CD4-positive, alpha-beta T cell (primary cell): ENCODE measurements at regions of chr4 and their contacts with region 1.

Region 1: GRCh38 chr4:76504613-76505465 is 69.8 kb downstream of the SHROOM3 start:
- DNase-seq: peak in 3 of 14 experiments; percentile 43 to 57 (median 46)
- ATAC-seq: no peak
- H3K4me3 ChIP-seq: no peak overlapping the region
- H3K4me3 Mint-ChIP-seq: no peak overlapping the region
- H3K27ac ChIP-seq: no peak overlapping the region
- H3K27ac Mint-ChIP-seq: no peak overlapping the region
- H3K4me1 ChIP-seq: no peaks in the 10 kb centered on the region
- H3K4me1 Mint-ChIP-seq: no peaks in the 10 kb centered on the region
- H3K27me3 ChIP-seq: peaks cover 0 to 8% of the 10 kb centered on the region in 2 experiments
- H3K27me3 Mint-ChIP-seq: peaks cover 8% of the 10 kb centered on the region
- CTCF ChIP-seq: peak; percentile 55

Region 2: GRCh38 chr4:75995727-75996126 is 509.1 kb before region 1 on chr4:
- CTCF ChIA-PET with region 1: no interaction called
- POLR2A ChIA-PET with region 1: no interaction called
- intact Hi-C with region 1: loop called in 1 of 2 experiments (anchors 10 kb)
- DNase-seq: peak in 5 of 14 experiments; percentile 3 to 71 (median 61)
- ATAC-seq: no peak
- H3K4me3 ChIP-seq: no peak overlapping the region
- H3K4me3 Mint-ChIP-seq: no peak overlapping the region
- H3K27ac ChIP-seq: no peak overlapping the region
- H3K27ac Mint-ChIP-seq: no peak overlapping the region
- H3K4me1 ChIP-seq: peaks cover 6% of the 10 kb centered on the region
- H3K4me1 Mint-ChIP-seq: peaks cover 8% of the 10 kb centered on the region
- H3K27me3 ChIP-seq: no peaks in the 10 kb centered on the region
- H3K27me3 Mint-ChIP-seq: no peaks in the 10 kb centered on the region
- CTCF ChIP-seq: peak; percentile 80

Region 3: DNA sequence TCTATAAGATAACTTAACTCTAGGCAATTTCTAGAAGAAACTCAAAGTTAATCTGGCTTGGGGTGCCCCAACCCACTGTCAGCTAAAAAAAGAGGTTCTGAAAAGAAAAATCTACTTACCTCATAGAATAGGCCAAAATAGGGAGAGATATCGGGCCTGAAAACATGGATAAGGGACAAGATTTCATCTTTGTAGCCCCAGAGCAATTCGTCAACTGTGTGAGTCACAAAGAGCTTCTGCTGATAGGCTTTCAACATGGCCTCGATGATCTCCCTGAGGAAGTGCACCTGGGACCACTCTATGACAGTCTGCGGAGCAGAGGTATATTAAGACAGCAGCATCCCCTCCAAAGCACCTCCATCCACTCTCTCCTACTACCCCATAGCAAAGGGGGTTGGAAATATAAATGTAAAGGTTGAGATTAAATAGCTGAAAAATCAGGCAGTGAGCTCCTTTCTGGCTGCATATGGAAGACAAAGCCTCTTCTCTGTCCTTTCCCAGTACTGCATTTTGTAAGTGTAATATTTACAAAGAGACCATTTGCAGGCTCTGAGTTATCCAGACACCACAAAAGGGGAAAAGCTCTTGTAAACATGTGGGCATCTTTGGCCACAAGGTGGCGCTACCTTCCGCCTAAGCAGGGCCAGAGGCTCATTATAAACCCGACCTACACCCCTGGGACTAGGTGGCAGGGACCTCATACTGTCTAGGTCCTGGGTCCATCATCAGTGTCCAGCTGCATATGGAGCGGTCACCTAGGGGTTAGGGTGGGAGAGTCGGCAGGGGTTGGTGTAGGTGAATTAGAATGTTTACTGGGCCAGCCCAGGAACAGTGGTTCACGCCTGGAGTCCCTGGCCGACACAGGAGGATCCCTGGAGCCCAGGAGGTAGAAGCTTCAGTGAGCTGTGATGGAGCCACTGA is 325.2 kb before region 1 on chr4:
- CTCF ChIA-PET with region 1: interaction called, 20 read pairs
- POLR2A ChIA-PET with region 1: no interaction called
- intact Hi-C with region 1: loop called in 1 of 2 experiments (anchors 1 kb)
- DNase-seq: peak; percentile 71 to 89 (median 77)
- ATAC-seq: peak; percentile 92
- H3K4me3 ChIP-seq: no peak overlapping the region
- H3K4me3 Mint-ChIP-seq: no peak overlapping the region
- H3K27ac ChIP-seq: no peak overlapping the region
- H3K27ac Mint-ChIP-seq: no peak overlapping the region
- H3K4me1 ChIP-seq: no peaks in the 10 kb centered on the region
- H3K4me1 Mint-ChIP-seq: no peaks in the 10 kb centered on the region
- H3K27me3 ChIP-seq: no peaks in the 10 kb centered on the region
- H3K27me3 Mint-ChIP-seq: no peaks in the 10 kb centered on the region
- CTCF ChIP-seq: peak; percentile 94

Region 4: GRCh38 chr4:76279472-76279871 is 225.4 kb before region 1 on chr4:
- CTCF ChIA-PET with region 1: no interaction called
- POLR2A ChIA-PET with region 1: no interaction called
- intact Hi-C with region 1: loop called in 1 of 2 experiments (anchors 10 kb)
- DNase-seq: peak in 6 of 14 experiments; percentile 11 to 59 (median 18)
- ATAC-seq: no peak
- H3K4me3 ChIP-seq: no peak overlapping the region
- H3K4me3 Mint-ChIP-seq: no peak overlapping the region
- H3K27ac ChIP-seq: no peak overlapping the region
- H3K27ac Mint-ChIP-seq: no peak overlapping the region
- H3K4me1 ChIP-seq: no peaks in the 10 kb centered on the region
- H3K4me1 Mint-ChIP-seq: no peaks in the 10 kb centered on the region
- H3K27me3 ChIP-seq: peaks cover 0 to 5% of the 10 kb centered on the region in 2 experiments
- H3K27me3 Mint-ChIP-seq: no peaks in the 10 kb centered on the region
- CTCF ChIP-seq: peak; percentile 12